Calu3 (cell line): ENCODE measurements at regions of chr7 and their contacts with region 1.

Region 1: GRCh38 chr7:50962962-50963374 is 180.3 kb upstream of the GRB10 start:
- DNase-seq: peak; percentile 92
- H3K4me3 Mint-ChIP-seq: no peak overlapping the region
- H3K27ac Mint-ChIP-seq: no peak overlapping the region
- H3K4me1 Mint-ChIP-seq: peaks cover 42% of the 10 kb centered on the region
- H3K27me3 Mint-ChIP-seq: no peaks in the 10 kb centered on the region
- CTCF ChIP-seq: no peak

Region 2: GRCh38 chr7:50921114-50921813 is 41.7 kb before region 1 on chr7:
- CTCF ChIA-PET with region 1: no interaction called
- intact Hi-C with region 1: loop called (anchors 5 kb)
- DNase-seq: peak; percentile 64
- H3K4me3 Mint-ChIP-seq: no peak overlapping the region
- H3K27ac Mint-ChIP-seq: peak overlapping the region; percentile 19
- H3K4me1 Mint-ChIP-seq: peaks cover 35% of the 10 kb centered on the region
- H3K27me3 Mint-ChIP-seq: no peaks in the 10 kb centered on the region
- CTCF ChIP-seq: no peak

Region 3: DNA sequence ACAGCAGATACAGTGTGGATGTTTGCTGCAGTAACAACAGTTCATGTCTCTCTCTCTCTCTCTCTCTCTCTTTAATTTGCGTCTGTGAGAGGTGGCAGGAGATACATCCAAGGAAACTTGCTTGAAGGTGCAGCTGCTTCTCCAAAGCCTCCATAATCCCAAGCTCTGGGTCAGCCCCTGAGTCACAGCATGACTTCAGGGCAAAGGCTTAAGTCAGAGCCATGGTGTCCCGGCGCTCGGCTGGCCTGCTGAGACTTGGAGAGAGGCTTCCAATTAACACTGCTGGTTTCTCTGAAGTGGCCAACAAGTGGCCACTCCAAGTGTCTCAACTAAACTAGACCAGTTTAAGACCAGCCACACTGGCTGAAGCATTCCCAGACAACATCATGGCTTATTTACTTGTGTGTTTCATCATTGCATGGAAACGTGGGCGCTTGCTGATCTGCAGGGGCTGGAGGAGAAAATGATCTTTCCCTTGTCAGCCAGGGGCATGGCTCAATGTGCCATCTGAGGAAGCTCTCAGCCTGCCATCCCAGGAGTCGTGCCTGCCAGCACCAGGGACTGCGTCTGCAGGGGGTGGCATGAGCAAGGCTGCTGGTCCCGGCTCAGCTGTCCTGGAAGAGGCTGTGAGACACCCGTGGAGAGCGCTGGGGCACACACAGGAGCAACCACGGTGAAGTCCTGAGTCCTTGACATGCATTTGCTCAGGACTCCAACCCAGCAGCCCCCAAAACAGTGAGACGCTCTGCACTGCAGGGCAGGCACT is 99.4 kb after region 1 on chr7:
- CTCF ChIA-PET with region 1: interaction called, 15 read pairs
- intact Hi-C with region 1: no loop called
- DNase-seq: no peak
- H3K4me3 Mint-ChIP-seq: no peak overlapping the region
- H3K27ac Mint-ChIP-seq: no peak overlapping the region
- H3K4me1 Mint-ChIP-seq: peaks cover 17% of the 10 kb centered on the region
- H3K27me3 Mint-ChIP-seq: no peaks in the 10 kb centered on the region
- CTCF ChIP-seq: no peak